MCF 10A (cell line): ENCODE measurements at regions of chr20 and their contacts with region 1.

Region 1: DNA sequence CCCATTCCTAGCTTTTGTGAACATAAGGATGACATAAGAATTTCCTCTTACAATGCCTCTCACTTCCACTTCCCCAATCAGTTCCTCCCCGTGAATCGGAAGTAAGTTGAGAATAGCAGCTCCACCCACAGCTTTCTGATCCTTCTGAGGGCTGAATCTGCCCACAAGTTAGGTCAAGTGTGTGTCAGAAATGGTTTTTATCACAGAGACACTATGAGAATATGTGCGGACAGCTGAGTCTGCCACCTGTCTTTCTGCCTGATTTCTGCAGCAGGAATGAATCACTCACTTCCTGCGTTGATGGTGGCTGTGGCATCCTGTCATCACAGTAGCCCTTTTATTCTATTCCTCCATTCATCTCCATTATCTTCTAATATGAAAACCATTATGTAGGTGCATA is 70.2 kb downstream of the RIN2 start:
- DNase-seq: peak; percentile 72
- H3K4me3 Mint-ChIP-seq: peak overlapping the region; percentile 9
- H3K27ac Mint-ChIP-seq: peak overlapping the region; percentile 60
- H3K4me1 Mint-ChIP-seq: peaks cover 17% of the 10 kb centered on the region
- H3K27me3 Mint-ChIP-seq: no peaks in the 10 kb centered on the region
- CTCF ChIP-seq: peak; percentile 46

Region 2: DNA sequence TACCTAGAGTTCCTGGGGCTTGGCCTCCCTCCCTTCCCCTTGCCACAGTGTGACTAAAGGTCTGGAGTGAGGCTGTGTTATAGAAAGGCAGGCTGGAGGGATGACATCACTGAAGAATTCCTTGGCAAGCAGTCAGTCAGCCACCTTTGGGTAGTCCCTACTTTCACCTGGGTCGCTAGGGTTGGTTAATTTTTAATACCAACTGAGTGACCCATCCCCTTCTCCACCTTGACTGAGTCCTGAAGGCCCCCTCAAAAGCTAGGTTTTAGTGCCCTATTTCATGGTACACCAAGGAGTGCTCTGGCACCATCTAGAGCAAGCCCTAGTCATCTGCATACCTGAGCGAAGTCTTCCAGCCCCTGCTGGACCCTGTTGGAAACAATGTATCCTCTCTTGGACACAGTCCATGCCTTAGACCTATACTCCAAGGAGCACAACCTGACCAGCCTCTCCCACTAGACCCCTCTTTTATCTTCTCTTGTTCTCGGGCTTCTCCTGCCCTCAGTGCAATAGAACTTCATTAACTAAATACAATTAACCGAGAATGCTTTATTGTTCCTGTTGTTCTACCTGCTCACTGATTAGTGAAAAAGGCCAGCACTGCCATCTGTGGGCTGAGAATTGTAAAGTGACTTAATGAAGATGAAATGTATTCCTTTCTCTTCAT is 25.6 kb before region 1 on chr20:
- CTCF ChIA-PET with region 1: interaction called, 31 read pairs
- POLR2A ChIA-PET with region 1: interaction called, 3 read pairs
- intact Hi-C with region 1: no loop called
- DNase-seq: peak; percentile 72
- H3K4me3 Mint-ChIP-seq: no peak overlapping the region
- H3K27ac Mint-ChIP-seq: peak overlapping the region; percentile 9
- H3K4me1 Mint-ChIP-seq: peaks cover 18% of the 10 kb centered on the region
- H3K27me3 Mint-ChIP-seq: no peaks in the 10 kb centered on the region
- CTCF ChIP-seq: peak; percentile 21

Region 3: GRCh38 chr20:19815553-19815991 is 12.7 kb before region 1 on chr20:
- CTCF ChIA-PET with region 1: interaction called, 85 read pairs
- POLR2A ChIA-PET with region 1: interaction called, 12 read pairs
- intact Hi-C with region 1: no loop called
- DNase-seq: peak; percentile 95
- H3K4me3 Mint-ChIP-seq: peak overlapping the region; percentile 44
- H3K27ac Mint-ChIP-seq: peak overlapping the region; percentile 90
- H3K4me1 Mint-ChIP-seq: peaks cover 20% of the 10 kb centered on the region
- H3K27me3 Mint-ChIP-seq: no peaks in the 10 kb centered on the region
- CTCF ChIP-seq: no peak

Region 4: GRCh38 chr20:19858466-19859371 is 30.5 kb after region 1 on chr20:
- CTCF ChIA-PET with region 1: interaction called, 14 read pairs
- POLR2A ChIA-PET with region 1: no interaction called
- intact Hi-C with region 1: no loop called
- DNase-seq: peak; percentile 48
- H3K4me3 Mint-ChIP-seq: no peak overlapping the region
- H3K27ac Mint-ChIP-seq: no peak overlapping the region
- H3K4me1 Mint-ChIP-seq: peaks cover 19% of the 10 kb centered on the region
- H3K27me3 Mint-ChIP-seq: no peaks in the 10 kb centered on the region
- CTCF ChIP-seq: no peak